ENCODE measurements at regions of chr7 and their contacts with region 1.

Region 1: GRCh38 chr7:26365077-26365900 is 73.6 kb downstream of the SNX10 start:
- DNase-seq: peak; percentile 54
- H3K4me3 ChIP-seq: no peak overlapping the region
- H3K27ac ChIP-seq: no peak overlapping the region
- H3K4me1 ChIP-seq: peaks cover 2% of the 10 kb centered on the region
- H3K27me3 ChIP-seq: no peaks in the 10 kb centered on the region
- CTCF ChIP-seq: peak; percentile 63 to 75

Region 2: DNA sequence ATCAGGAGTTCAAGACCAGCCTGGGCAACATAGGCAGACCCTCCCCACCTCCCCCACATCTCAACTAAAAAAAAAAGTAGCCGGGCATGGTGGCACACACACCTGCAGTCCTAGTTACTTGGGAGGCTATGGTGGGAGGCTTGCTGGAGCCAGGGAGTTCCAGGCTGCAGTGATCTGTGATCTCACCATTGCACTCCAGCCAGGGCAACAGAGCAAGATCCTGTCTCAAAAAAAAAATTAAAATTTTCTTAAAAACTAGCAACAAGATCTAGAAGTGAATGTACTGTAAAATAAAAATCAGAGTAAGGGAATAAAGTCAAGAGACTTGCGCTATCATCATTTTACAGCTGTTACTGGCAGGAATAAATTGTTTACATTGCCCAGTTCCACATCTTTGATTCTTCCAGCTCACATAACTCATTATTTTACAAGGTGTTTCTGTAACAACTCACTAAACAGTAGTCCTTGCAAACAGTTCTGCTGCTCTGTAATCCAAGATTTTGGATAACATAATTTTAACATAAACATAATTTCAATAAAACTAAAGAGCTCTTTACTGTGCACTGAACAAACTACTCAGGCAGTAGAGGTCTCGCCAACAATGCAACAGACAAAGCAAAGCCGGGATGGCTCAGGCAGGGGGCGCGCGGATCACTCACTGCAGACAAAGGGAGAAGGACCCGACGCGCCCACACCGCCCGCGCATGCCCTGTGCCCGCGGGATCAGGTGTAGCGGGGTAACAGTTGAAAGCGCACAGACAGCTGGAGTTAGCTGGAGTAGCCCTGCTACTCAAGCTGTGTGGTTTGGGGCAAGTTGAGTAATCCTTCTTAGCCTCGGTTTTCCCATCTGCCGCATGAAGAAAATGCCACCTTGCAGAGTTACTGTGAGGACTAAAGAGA is 286.6 kb before region 1 on chr7:
- CTCF ChIA-PET with region 1: no interaction called
- dilution Hi-C with region 1: no loop called
- in situ Hi-C with region 1: loop called in 1 of 2 experiments (anchors 25 kb)
- intact Hi-C with region 1: loop called (anchors 1 kb)
- DNase-seq: peak; percentile 60
- H3K4me3 ChIP-seq: no peak overlapping the region
- H3K27ac ChIP-seq: no peak overlapping the region
- H3K4me1 ChIP-seq: peaks cover 13% of the 10 kb centered on the region
- H3K27me3 ChIP-seq: no peaks in the 10 kb centered on the region
- CTCF ChIP-seq: peak; percentile 10 to 64

Region 3: GRCh38 chr7:26200444-26201246 is 164.6 kb before region 1 on chr7 and contains the start of gene HNRNPA2B1:
- CTCF ChIA-PET with region 1: interaction called, 3 read pairs
- dilution Hi-C with region 1: no loop called
- in situ Hi-C with region 1: loop called in 1 of 2 experiments (anchors 25 kb)
- intact Hi-C with region 1: loop called (anchors 2 kb)
- DNase-seq: peak; percentile 97
- H3K4me3 ChIP-seq: peak within 1 kb of the TSS; percentile 99 to 100 (median 100)
- H3K27ac ChIP-seq: peak within 1 kb of the TSS; percentile 93
- H3K4me1 ChIP-seq: peaks cover 28% of the 10 kb centered on the region
- H3K27me3 ChIP-seq: no peaks in the 10 kb centered on the region
- CTCF ChIP-seq: no peak
- total RNA-seq, gene HNRNPA2B1: 62.0 to 506 TPM

Region 4: GRCh38 chr7:26500749-26501352 is 135.6 kb after region 1 on chr7:
- CTCF ChIA-PET with region 1: interaction called, 4 read pairs
- dilution Hi-C with region 1: no loop called
- in situ Hi-C with region 1: loop called (anchors 10 kb)
- intact Hi-C with region 1: loop called (anchors 1 kb)
- DNase-seq: peak; percentile 27
- H3K4me3 ChIP-seq: no peak overlapping the region
- H3K27ac ChIP-seq: no peak overlapping the region
- H3K4me1 ChIP-seq: no peaks in the 10 kb centered on the region
- H3K27me3 ChIP-seq: no peaks in the 10 kb centered on the region
- CTCF ChIP-seq: peak; percentile 37 to 65

Region 5: DNA sequence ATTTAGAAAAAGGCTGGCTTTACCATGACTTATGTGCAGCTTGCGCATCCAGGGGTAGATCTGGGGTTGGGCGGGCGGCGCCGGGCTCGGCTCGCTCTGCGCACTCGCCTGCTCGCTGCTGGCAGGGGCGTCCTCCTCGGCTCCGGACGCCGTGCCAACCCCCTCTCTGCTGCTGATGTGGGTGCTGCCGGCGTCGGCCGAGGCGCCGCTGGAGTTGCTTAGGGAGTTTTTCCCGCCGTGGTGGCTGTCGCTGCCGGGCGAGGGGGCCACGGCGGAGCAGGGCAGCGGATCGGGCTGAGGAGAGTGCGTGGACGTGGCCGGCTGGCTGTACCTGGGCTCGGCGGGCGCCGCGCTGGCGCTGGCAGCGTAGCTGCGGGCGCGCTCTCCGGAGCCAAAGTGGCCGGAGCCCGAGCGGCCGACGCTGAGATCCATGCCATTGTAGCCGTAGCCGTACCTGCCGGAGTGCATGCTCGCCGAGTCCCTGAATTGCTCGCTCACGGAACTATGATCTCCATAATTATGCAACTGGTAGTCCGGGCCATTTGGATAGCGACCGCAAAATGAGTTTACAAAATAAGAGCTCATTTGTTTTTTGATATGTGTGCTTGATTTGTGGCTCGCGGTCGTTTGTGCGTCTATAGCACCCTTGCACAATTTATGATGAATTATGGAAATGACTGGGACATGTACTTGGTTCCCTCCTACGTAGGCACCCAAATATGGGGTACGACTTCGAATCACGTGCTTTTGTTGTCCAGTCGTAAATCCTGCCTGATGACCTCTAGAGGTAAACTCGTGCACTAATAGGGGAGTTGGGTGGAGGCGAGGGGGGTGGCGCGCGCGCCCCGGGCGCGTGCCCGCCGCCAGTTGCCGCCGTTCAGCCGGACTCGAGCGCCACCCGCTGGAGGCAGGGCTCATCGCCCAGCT is 778.0 kb after region 1 on chr7 and contains the start of gene HOXA5:
- CTCF ChIA-PET with region 1: interaction called, 3 read pairs
- dilution Hi-C with region 1: no loop called
- in situ Hi-C with region 1: loop called in 1 of 2 experiments (anchors 10 kb)
- intact Hi-C with region 1: loop called (anchors 1 kb)
- DNase-seq: peak; percentile 99
- H3K4me3 ChIP-seq: peak within 1 kb of the TSS; percentile 70 to 81 (median 74)
- H3K27ac ChIP-seq: peak within 1 kb of the TSS; percentile 89
- H3K4me1 ChIP-seq: peaks cover 60% of the 10 kb centered on the region
- H3K27me3 ChIP-seq: no peaks in the 10 kb centered on the region
- CTCF ChIP-seq: peak; percentile 75 to 91
- total RNA-seq, gene HOXA5: 9.1 to 11.0 TPM

Region 6: GRCh38 chr7:27160546-27161213 is 795.4 kb after region 1 on chr7:
- CTCF ChIA-PET with region 1: interaction called, 9 read pairs
- dilution Hi-C with region 1: no loop called
- in situ Hi-C with region 1: loop called in 1 of 2 experiments (anchors 10 kb)
- intact Hi-C with region 1: loop called (anchors 1 kb)
- DNase-seq: peak; percentile 69
- H3K4me3 ChIP-seq: peak overlapping the region; percentile 48 to 72 (median 56)
- H3K27ac ChIP-seq: peak overlapping the region; percentile 53
- H3K4me1 ChIP-seq: peaks cover 61% of the 10 kb centered on the region
- H3K27me3 ChIP-seq: peaks cover 8% of the 10 kb centered on the region
- CTCF ChIP-seq: peak; percentile 78 to 98